ENCODE measurements at regions of chr3 and their contacts with region 1.

Region 1: GRCh38 chr3:45037734-45038455 is 11.8 kb downstream of the CLEC3B start:
- DNase-seq: peak; percentile 88 to 93 (median 91)
- H3K4me3 ChIP-seq: no peak overlapping the region
- H3K4me3 Mint-ChIP-seq: peak overlapping the region in 6 of 8 donors; percentile 54 to 86 (median 78)
- H3K27ac ChIP-seq: no peak overlapping the region
- H3K27ac Mint-ChIP-seq: peak overlapping the region in 3 of 7 donors; percentile 51 to 78 (median 72)
- H3K4me1 ChIP-seq: peaks cover 32% of the 10 kb centered on the region
- H3K4me1 Mint-ChIP-seq: peaks cover 24 to 66% (median 43%) of the 10 kb centered on the region in 4 donors
- H3K27me3 ChIP-seq: no peaks in the 10 kb centered on the region
- H3K27me3 Mint-ChIP-seq: peaks cover 10 to 34% of the 10 kb centered on the region in 2 donors

Region 2: GRCh38 chr3:44529927-44530326 is 508.0 kb before region 1 on chr3:
- CTCF ChIA-PET with region 1: no interaction called
- POLR2A ChIA-PET with region 1: no interaction called
- intact Hi-C with region 1: loop called (anchors 2 kb)
- DNase-seq: peak in 1 of 5 donors; percentile 22
- H3K4me3 ChIP-seq: no peak overlapping the region
- H3K4me3 Mint-ChIP-seq: no peak overlapping the region
- H3K27ac ChIP-seq: no peak overlapping the region
- H3K27ac Mint-ChIP-seq: peak overlapping the region in 1 of 7 donors; percentile 48
- H3K4me1 ChIP-seq: no peaks in the 10 kb centered on the region
- H3K4me1 Mint-ChIP-seq: peaks cover 0 to 2% (median under 1%) of the 10 kb centered on the region in 4 donors
- H3K27me3 ChIP-seq: no peaks in the 10 kb centered on the region
- H3K27me3 Mint-ChIP-seq: peaks cover 20 to 21% of the 10 kb centered on the region in 2 donors

Region 3: DNA sequence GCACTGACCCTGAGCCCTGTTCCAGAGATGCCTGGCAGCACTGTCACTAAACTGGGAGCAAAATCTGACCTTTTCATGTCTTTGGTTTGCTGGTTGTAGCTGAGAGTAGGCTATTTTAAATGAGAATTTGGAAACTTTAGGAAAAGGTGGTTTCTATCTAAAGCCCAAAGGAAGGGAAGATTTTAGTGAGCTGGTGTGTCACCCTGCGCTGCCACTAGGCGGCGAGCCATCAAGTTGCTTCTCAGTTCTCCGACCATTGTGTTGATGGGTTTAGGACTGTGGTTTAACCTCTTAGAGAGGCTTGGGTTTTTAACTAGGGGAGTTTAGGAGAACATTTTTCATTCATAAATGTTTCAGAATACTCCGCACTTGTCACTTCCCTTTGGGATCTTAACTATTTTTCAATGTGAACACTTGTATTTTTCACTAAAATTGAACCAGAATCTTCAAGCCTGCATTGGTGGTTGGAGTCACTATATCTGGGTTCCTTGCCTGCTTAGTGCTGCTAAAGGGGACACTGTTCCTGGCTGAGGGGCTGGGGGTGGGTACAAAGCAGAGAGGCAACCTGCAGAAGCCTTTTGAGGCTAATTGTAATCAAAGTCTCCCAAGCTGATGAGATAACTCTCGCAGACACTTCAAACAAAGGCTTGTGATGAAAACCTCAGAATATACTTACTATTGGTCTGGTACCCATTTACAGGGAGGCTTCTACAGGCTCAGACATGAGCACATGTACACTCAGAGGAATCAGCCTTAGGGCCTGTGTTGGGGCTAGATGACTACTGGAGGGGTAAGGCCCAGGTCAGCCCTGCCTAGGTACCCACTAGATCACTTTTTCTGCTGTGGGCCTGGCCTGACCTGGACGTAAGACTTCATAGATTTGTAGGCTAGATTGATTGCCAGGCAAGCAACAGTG is 45.1 kb before region 1 on chr3:
- CTCF ChIA-PET with region 1: interaction called, 31 read pairs
- POLR2A ChIA-PET with region 1: interaction called, 4 read pairs
- intact Hi-C with region 1: no loop called
- DNase-seq: no peak
- H3K4me3 ChIP-seq: no peak overlapping the region
- H3K4me3 Mint-ChIP-seq: no peak overlapping the region
- H3K27ac ChIP-seq: no peak overlapping the region
- H3K27ac Mint-ChIP-seq: peak overlapping the region in 4 of 7 donors; percentile 37 to 73 (median 65)
- H3K4me1 ChIP-seq: peaks cover 19% of the 10 kb centered on the region
- H3K4me1 Mint-ChIP-seq: peaks cover 31 to 60% (median 41%) of the 10 kb centered on the region in 4 donors
- H3K27me3 ChIP-seq: no peaks in the 10 kb centered on the region
- H3K27me3 Mint-ChIP-seq: no peaks in the 10 kb centered on the region

Region 4: GRCh38 chr3:45011756-45012508 is 26.0 kb before region 1 on chr3:
- CTCF ChIA-PET with region 1: interaction called, 20 read pairs
- POLR2A ChIA-PET with region 1: interaction called, 14 read pairs
- intact Hi-C with region 1: no loop called
- DNase-seq: no peak
- H3K4me3 ChIP-seq: no peak overlapping the region
- H3K4me3 Mint-ChIP-seq: peak overlapping the region in 6 of 8 donors; percentile 9 to 60 (median 48)
- H3K27ac ChIP-seq: no peak overlapping the region
- H3K27ac Mint-ChIP-seq: peak overlapping the region; percentile 21 to 91 (median 72)
- H3K4me1 ChIP-seq: peaks cover 33% of the 10 kb centered on the region
- H3K4me1 Mint-ChIP-seq: peaks cover 10 to 45% (median 31%) of the 10 kb centered on the region in 4 donors
- H3K27me3 ChIP-seq: no peaks in the 10 kb centered on the region
- H3K27me3 Mint-ChIP-seq: no peaks in the 10 kb centered on the region

Region 5: DNA sequence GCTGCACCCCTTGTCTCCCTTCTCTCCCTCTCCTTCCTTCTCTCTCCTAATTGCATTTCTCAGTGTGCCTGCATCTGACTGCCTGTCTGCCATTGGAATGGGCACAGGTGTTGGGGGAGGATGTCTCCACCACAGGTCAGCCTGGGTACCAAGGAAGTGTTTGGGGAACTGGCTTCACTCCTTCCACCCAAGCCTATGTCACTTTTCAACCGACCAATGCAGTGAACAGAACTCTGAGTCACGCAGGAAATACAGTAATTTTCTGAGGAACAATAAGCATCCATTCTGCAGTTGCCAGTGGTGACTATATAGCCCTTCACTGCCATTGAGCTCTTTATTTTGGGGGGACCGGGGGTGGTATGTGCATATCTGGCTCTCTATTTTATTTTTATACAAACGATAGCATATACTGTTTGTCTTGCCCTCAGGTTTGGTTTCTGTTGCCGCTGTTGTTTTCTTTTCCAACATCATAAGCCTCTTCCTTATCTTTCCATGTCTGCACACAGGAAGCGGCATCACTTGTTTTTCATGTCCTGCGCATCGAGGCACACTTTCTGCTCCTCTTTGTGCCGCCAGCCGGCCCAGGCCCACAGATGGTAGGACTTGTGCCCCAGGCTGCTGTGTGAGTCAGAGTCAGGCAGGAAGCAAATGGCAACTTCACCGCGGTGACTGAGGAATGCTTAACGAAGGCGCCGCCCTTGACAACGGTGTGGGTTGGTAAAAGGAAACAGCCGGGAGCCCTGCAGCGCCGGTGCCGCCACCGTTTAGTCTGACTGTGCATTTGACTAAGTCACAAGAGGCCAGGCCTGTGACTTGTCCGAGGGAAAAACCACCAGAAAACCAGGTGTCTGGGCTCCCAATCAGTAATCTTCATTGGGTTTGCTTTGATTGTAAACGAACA is 129.4 kb after region 1 on chr3:
- CTCF ChIA-PET with region 1: interaction called, 16 read pairs
- POLR2A ChIA-PET with region 1: interaction called, 5 read pairs
- intact Hi-C with region 1: loop called (anchors 1 kb)
- DNase-seq: peak; percentile 71 to 90 (median 77)
- H3K4me3 ChIP-seq: peak overlapping the region; percentile 8 to 21
- H3K4me3 Mint-ChIP-seq: peak overlapping the region; percentile 67 to 91 (median 82)
- H3K27ac ChIP-seq: peak overlapping the region; percentile 39
- H3K27ac Mint-ChIP-seq: peak overlapping the region; percentile 78 to 99 (median 95)
- H3K4me1 ChIP-seq: peaks cover 24% of the 10 kb centered on the region
- H3K4me1 Mint-ChIP-seq: peaks cover 15 to 35% (median 22%) of the 10 kb centered on the region in 4 donors
- H3K27me3 ChIP-seq: no peaks in the 10 kb centered on the region
- H3K27me3 Mint-ChIP-seq: peaks cover 0 to 2% of the 10 kb centered on the region in 2 donors

Region 6: DNA sequence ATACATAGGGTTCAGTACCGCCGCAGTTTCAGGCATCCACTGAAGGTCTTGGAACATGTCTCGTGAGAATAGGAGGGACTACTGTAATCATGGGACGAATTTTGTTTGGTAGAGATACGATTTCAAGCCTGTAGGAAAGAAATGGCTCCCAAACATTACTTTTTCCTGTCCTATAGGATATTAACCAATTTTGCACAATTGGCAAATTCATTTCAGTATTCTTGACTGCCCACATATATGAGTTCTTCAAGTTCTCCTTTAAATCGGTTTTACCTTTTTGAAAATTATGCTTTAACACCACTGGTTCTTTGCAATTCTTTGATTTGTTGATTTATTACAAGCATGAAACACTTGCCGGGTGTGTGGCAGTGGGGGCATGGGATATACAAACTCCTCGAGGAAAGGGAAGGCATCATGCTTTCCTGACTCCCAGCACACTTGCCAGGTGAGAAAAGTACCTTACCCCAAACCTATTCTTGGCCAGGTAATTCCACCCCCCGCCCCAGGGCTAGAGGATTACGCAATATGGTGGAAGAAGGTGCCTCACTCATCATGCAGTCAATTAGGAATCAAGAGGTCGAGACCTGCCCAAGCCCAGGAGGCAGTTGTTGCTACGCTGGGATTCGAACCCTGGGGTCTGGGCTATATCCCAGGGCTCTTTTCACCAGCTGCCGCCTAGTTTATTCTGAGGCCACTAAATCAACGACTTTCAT is 349.9 kb after region 1 on chr3:
- CTCF ChIA-PET with region 1: no interaction called
- POLR2A ChIA-PET with region 1: no interaction called
- intact Hi-C with region 1: loop called (anchors 1 kb)
- DNase-seq: peak in 1 of 5 donors; percentile 4
- H3K4me3 ChIP-seq: peak overlapping the region; percentile 81 to 89
- H3K4me3 Mint-ChIP-seq: peak overlapping the region; percentile 96 to 99 (median 98)
- H3K27ac ChIP-seq: peak overlapping the region; percentile 71
- H3K27ac Mint-ChIP-seq: peak overlapping the region; percentile 85 to 97 (median 95)
- H3K4me1 ChIP-seq: peaks cover 18% of the 10 kb centered on the region
- H3K4me1 Mint-ChIP-seq: peaks cover 9 to 24% (median 18%) of the 10 kb centered on the region in 4 donors
- H3K27me3 ChIP-seq: peaks cover 9% of the 10 kb centered on the region
- H3K27me3 Mint-ChIP-seq: peaks cover 4 to 9% of the 10 kb centered on the region in 2 donors

Region 7: GRCh38 chr3:45507820-45508317 is 470.0 kb after region 1 on chr3:
- CTCF ChIA-PET with region 1: interaction called, 14 read pairs
- POLR2A ChIA-PET with region 1: no interaction called
- intact Hi-C with region 1: no loop called
- DNase-seq: no peak
- H3K4me3 ChIP-seq: no peak overlapping the region
- H3K4me3 Mint-ChIP-seq: no peak overlapping the region
- H3K27ac ChIP-seq: no peak overlapping the region
- H3K27ac Mint-ChIP-seq: no peak overlapping the region
- H3K4me1 ChIP-seq: peaks cover 10% of the 10 kb centered on the region
- H3K4me1 Mint-ChIP-seq: peaks cover 0 to 4% (median 2%) of the 10 kb centered on the region in 4 donors
- H3K27me3 ChIP-seq: no peaks in the 10 kb centered on the region
- H3K27me3 Mint-ChIP-seq: no peaks in the 10 kb centered on the region

Measured in CD4-positive, alpha-beta memory T cell (primary cell).